Activated B cell treated with CpG ODN at 0.5 μM for 24 hours (primary cell): ENCODE measurements at regions of chr1 and their contacts with region 1.

Region 1: DNA sequence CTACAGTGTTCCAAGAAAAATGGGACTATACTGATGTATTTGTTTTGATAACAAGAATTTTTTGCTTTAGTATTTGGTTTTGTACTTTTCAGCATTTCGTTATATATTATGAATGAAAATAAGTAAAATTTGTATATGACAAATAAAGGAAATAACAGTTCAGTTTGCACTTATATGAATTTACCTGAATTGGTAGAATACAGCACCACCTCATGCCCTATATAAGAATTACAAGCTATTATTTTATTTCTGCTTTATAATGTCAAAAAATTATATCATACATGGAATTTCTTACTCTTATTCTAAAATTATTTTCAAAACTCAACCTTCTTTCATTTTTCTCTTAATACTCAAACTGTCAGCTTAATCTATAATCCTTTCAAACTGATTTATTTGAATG is 14.6 kb downstream of the EFCAB7 start:
- DNase-seq: no peak
- ATAC-seq: no peak
- H3K4me3 Mint-ChIP-seq: no peak overlapping the region
- H3K27ac Mint-ChIP-seq: no peak overlapping the region
- H3K4me1 Mint-ChIP-seq: no peaks in the 10 kb centered on the region
- H3K27me3 Mint-ChIP-seq: no peaks in the 10 kb centered on the region
- CTCF ChIP-seq: no peak

Region 2: GRCh38 chr1:62912028-62912638 is 625.8 kb before region 1 on chr1:
- CTCF ChIA-PET with region 1: no interaction called
- POLR2A ChIA-PET with region 1: no interaction called
- intact Hi-C with region 1: loop called (anchors 5 kb)
- DNase-seq: no peak
- ATAC-seq: no peak
- H3K4me3 Mint-ChIP-seq: no peak overlapping the region
- H3K27ac Mint-ChIP-seq: no peak overlapping the region
- H3K4me1 Mint-ChIP-seq: no peaks in the 10 kb centered on the region
- H3K27me3 Mint-ChIP-seq: peaks cover 3% of the 10 kb centered on the region
- CTCF ChIP-seq: no peak

Region 3: GRCh38 chr1:63864224-63864641 is 326.3 kb after region 1 on chr1:
- CTCF ChIA-PET with region 1: no interaction called
- POLR2A ChIA-PET with region 1: no interaction called
- intact Hi-C with region 1: no loop called
- DNase-seq: no peak
- ATAC-seq: no peak
- H3K4me3 Mint-ChIP-seq: no peak overlapping the region
- H3K27ac Mint-ChIP-seq: no peak overlapping the region
- H3K4me1 Mint-ChIP-seq: no peaks in the 10 kb centered on the region
- H3K27me3 Mint-ChIP-seq: no peaks in the 10 kb centered on the region
- CTCF ChIP-seq: no peak